ENCODE measurements at regions of chr2 and their contacts with region 1.

Region 1: DNA sequence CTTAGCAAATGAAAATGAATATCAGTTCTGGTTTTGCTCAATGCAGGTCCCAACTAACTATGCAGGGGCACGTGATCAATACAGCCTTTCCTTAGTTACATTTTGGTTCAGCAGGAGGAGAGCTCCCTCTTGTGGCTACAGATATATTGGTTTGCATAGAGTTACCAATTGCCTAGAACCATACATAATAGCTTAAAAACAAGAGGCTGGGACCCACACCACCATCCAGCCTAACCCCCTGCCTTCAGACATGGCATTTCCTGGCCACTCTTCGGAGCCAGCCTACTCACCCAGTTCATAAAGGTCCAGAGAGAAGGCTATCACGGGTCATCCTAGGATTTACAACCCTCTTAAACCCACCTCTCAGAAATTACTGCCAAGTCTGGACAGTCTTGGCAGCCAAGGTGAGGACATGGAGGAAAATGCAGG is 10.5 kb downstream of the CCDC93 start:
- DNase-seq: peak; percentile 55
- H3K4me3 Mint-ChIP-seq: no peak overlapping the region
- H3K27ac Mint-ChIP-seq: no peak overlapping the region
- H3K4me1 Mint-ChIP-seq: peaks cover 7% of the 10 kb centered on the region
- H3K27me3 Mint-ChIP-seq: no peaks in the 10 kb centered on the region

Region 2: DNA sequence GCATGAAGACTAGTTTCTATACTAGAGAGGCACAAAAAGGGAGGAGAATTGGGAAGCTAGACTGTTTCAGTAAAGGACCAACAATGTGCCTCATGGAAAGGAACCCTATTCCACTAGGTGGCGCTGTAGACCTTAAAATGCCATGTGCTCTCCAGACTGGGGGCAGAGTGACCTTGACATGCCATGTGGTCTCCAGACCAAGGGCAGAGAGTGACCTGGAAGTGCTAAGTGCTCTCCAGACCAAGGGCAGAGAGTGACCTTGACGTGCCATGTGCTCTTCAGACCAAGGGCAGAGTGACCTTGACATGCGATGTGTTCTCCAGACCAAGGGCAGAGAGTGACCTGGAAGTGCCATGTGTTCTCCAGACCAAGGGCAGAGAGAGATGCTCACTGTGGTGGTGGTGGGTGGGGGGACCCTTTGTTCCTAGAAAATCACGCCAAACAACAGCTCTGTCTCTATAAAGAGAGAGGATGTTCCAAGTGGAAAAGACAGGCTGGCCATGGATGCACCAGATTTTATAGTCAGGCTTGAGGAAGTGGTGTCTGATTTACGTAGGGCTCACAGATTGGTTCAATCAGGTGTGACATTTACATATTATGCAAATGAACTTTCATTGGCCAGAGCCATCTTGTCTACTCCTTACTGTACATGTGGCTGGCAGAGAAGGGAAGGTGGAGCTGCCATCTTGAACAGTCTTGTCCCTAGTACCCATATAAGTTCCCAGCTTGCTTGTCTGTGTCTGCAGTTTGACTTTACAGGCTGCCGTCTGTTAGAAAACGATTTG is 532.9 kb before region 1 on chr2:
- intact Hi-C with region 1: loop called (anchors 2 kb)
- DNase-seq: peak; percentile 1
- H3K4me3 Mint-ChIP-seq: no peak overlapping the region
- H3K27ac Mint-ChIP-seq: no peak overlapping the region
- H3K4me1 Mint-ChIP-seq: no peaks in the 10 kb centered on the region
- H3K27me3 Mint-ChIP-seq: no peaks in the 10 kb centered on the region

Region 3: DNA sequence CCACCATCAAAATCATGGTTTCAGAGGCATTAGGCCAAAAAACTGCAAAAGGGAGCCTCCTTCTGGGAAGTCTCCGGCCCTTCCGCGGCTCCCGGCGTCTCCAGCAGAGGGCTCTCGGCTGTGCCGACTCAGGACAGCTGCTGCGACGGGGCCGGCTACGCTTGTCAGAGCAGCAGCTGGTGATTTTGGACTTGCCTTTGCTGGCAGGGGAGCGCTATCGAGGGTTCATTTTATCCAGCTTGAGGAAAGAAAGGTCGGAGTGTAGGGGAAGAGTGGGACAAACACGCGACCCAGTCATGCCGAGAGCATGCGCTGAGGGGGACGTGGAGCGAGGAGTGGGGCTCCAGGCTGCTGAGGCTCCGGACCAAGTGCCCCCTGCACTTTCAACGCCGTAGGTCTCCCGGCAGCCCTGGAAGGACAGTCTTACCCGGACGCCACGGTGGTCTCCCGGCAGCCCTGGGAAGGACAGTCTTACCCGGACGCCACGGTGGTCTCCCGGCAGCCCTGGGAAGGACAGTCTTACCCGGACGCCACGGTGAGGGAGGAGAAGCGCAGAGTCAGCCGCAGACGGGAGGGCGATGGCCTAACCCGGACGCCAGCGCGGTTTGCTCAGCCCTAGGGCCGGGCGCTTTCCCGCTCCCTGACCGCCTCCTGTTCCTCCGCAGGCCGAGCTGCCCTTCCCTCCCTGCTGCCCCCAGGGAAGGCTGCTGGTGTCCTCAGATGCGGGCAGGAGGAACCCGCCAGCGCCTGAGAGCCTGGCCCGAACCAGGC is 167.2 kb before region 1 on chr2:
- intact Hi-C with region 1: loop called (anchors 1 kb)
- DNase-seq: peak; percentile 23
- H3K4me3 Mint-ChIP-seq: peak overlapping the region; percentile 53
- H3K27ac Mint-ChIP-seq: no peak overlapping the region
- H3K4me1 Mint-ChIP-seq: no peaks in the 10 kb centered on the region
- H3K27me3 Mint-ChIP-seq: no peaks in the 10 kb centered on the region

Region 4: GRCh38 chr2:117958186-117958585 is 45.2 kb before region 1 on chr2:
- intact Hi-C with region 1: loop called (anchors 5 kb)
- DNase-seq: no peak
- H3K4me3 Mint-ChIP-seq: no peak overlapping the region
- H3K27ac Mint-ChIP-seq: no peak overlapping the region
- H3K4me1 Mint-ChIP-seq: no peaks in the 10 kb centered on the region
- H3K27me3 Mint-ChIP-seq: no peaks in the 10 kb centered on the region

Region 5: GRCh38 chr2:118013724-118014491 is 10.5 kb after region 1 on chr2 and contains the start of gene CCDC93:
- intact Hi-C with region 1: loop called (anchors 1 kb)
- DNase-seq: peak; percentile 87
- H3K4me3 Mint-ChIP-seq: peak within 1 kb of the TSS; percentile 92
- H3K27ac Mint-ChIP-seq: peak within 1 kb of the TSS; percentile 88
- H3K4me1 Mint-ChIP-seq: peaks cover 42% of the 10 kb centered on the region
- H3K27me3 Mint-ChIP-seq: no peaks in the 10 kb centered on the region
- total RNA-seq, gene CCDC93: 33.3 and 34.4 TPM in 2 replicates

Measured in activated T-helper 1 cell treated with anti-CD3 and anti-CD28 coated beads, Interleukin-12 subunit alpha, Interleukin-12 subunit beta, Interleukin-2, Interleukin-4 antibody, amounts not matched to agents 30 ng/mL and 10 ng/mL and 1 ng/mL, durations not matched to agents 14 hours and 24 hours and 36 hours (primary cell).